ENCODE measurements at regions of chr21 and their contacts with region 1.

Region 1: DNA sequence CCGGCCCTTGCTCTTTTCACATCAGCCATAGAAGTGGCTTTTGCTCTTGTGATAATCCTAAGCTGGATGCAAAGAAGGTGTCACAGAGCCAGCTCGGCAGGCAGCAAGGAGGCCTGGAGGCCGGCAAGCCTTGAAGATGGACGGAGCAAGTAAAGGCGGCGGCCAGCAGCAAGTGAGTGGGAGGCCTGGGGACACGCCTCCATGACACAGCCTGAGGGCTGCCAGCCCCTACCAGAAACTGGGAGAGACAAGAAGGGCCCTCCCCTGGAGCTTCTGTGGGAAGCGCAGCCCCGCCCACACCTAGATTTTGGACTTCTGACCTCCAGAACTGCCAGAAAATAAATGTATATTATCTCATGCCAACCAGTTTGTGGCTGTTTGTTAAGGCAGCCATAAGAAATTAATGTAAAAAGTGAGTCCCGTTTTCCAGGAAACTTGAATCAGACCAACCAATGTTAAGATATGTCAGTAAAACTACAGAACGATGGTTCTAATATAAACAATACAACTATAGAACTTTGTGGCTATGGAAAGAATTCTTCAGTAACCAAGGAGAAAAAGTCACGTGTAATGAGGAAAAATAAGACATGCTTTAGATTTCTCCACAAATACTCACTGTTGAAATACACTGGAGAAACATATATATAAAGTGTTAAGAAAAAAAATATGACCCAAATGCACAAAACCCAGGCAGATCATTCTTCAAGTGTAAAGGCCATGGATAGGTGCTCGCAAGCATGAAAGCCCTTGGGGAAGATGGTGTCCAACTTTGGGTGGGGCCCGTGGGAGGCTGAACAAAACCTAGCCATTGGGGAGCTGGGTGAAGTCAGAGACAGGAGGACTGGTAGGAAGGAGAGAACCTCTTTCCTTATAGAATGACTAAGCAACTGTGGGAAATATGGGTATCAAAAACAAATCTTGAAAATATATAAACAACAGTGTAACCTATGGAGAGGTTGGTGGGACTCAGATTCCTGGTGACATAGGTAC is 50.0 kb downstream of the BACE2 start:
- DNase-seq: peak in 1 of 2 donors; percentile 82
- H3K4me3 ChIP-seq: no peak overlapping the region
- H3K27ac ChIP-seq: peak overlapping the region; percentile 33 to 68
- H3K4me1 ChIP-seq: peaks cover 0 to 20% of the 10 kb centered on the region in 2 donors
- H3K27me3 ChIP-seq: no peaks in the 10 kb centered on the region
- CTCF ChIP-seq: no peak

Region 2: GRCh38 chr21:41247561-41248284 is 29.8 kb after region 1 on chr21:
- intact Hi-C with region 1: loop called (anchors 5 kb)
- DNase-seq: peak; percentile 78 to 94
- H3K4me3 ChIP-seq: peak overlapping the region; percentile 36 to 45
- H3K27ac ChIP-seq: peak overlapping the region; percentile 85 to 92
- H3K4me1 ChIP-seq: peaks cover 25 to 43% of the 10 kb centered on the region in 2 donors
- H3K27me3 ChIP-seq: no peaks in the 10 kb centered on the region
- CTCF ChIP-seq: no peak

Region 3: GRCh38 chr21:41507496-41508299 is 289.7 kb after region 1 on chr21 and contains the start of gene TMPRSS2:
- intact Hi-C with region 1: no loop called
- DNase-seq: no peak
- H3K4me3 ChIP-seq: peak within 1 kb of the TSS; percentile 3 to 30
- H3K27ac ChIP-seq: no peak within 1 kb of the TSS
- H3K4me1 ChIP-seq: no peaks in the 10 kb centered on the region
- H3K27me3 ChIP-seq: peaks cover 6% of the 10 kb centered on the region
- CTCF ChIP-seq: no peak
- total RNA-seq, gene TMPRSS2: not detected